Activated CD8-positive, alpha-beta memory T cell treated with anti-CD3 and anti-CD28 coated beads, Interleukin-2, amount 10 ng/mL, durations not matched to agents 7 days and 5 days (primary cell): ENCODE measurements at regions of chr6 and their contacts with region 1.

Region 1: DNA sequence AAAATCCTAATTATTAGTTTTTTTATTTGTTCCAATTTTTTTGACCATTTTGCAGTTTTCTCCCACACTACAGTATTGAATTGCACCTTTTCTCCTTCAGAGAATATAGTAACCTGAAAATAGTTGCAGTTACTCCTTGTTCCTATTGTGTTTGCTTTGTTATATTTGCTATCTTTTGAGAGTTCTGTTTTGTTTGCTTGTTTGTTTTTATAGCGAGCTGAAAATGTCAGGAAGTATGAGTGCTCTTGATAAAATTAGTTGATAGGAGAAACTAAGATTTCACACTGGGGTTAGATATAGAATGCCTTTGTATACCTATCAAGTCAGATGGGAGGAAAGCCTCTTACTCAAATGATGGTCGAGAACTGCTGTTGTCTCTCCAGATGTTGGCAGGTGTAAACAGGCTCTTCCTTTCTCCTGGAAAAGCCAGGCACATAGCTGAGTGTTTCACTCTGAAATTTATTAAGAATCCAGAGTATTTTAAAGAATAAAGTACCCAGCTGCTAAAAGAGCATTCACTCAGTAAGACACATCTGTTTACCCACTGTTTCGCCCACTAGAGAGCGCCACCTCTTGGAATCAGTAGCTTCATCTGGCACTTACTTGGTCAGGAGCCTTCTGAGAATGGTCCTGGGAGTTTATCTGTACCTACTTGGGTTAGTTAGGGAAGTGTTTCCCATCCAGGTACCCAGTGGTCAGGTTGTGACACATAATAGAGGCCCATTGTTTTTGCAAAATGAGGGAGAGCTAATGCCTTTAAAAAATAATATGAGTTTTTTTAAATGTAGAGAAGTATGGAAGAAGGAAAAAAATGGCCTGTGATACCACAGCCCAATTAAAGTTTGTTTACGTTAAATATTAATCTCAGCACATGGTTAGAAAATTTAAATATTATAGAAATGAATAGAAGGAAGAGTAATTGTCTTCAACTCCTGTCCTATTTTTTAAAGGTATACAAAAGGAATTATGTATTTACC is 11.2 kb downstream of the NT5DC1 start:
- DNase-seq: peak; percentile 62
- ATAC-seq: peak; percentile 64
- H3K4me3 Mint-ChIP-seq: no peak overlapping the region
- H3K27ac Mint-ChIP-seq: no peak overlapping the region
- H3K4me1 Mint-ChIP-seq: no peaks in the 10 kb centered on the region
- H3K27me3 Mint-ChIP-seq: no peaks in the 10 kb centered on the region

Region 2: GRCh38 chr6:115740907-115741306 is 370.9 kb before region 1 on chr6:
- CTCF ChIA-PET with region 1: no interaction called
- DNase-seq: no peak
- ATAC-seq: no peak
- H3K4me3 Mint-ChIP-seq: no peak overlapping the region
- H3K27ac Mint-ChIP-seq: no peak overlapping the region
- H3K4me1 Mint-ChIP-seq: no peaks in the 10 kb centered on the region
- H3K27me3 Mint-ChIP-seq: no peaks in the 10 kb centered on the region

Region 3: DNA sequence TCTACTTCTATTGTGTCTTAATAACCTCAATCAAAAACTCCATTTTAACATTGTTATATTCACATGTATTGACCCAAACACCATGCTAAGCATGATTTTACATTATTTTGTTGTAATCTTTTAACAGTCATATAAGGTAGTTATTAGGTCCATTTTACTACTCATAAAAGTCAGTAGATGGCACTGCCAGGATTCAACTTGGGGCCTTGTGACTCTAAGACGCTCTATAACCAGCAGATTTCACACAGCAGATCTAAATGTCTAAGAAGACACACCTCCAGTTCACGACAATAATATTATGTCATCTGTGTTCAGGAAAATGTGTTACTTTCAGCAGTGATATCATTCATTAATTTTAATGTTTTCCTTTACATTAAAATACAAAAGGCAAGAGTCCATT is 139.2 kb before region 1 on chr6:
- CTCF ChIA-PET with region 1: no interaction called
- DNase-seq: no peak
- ATAC-seq: no peak
- H3K4me3 Mint-ChIP-seq: no peak overlapping the region
- H3K27ac Mint-ChIP-seq: no peak overlapping the region
- H3K4me1 Mint-ChIP-seq: no peaks in the 10 kb centered on the region
- H3K27me3 Mint-ChIP-seq: peaks cover 2% of the 10 kb centered on the region

Region 4: DNA sequence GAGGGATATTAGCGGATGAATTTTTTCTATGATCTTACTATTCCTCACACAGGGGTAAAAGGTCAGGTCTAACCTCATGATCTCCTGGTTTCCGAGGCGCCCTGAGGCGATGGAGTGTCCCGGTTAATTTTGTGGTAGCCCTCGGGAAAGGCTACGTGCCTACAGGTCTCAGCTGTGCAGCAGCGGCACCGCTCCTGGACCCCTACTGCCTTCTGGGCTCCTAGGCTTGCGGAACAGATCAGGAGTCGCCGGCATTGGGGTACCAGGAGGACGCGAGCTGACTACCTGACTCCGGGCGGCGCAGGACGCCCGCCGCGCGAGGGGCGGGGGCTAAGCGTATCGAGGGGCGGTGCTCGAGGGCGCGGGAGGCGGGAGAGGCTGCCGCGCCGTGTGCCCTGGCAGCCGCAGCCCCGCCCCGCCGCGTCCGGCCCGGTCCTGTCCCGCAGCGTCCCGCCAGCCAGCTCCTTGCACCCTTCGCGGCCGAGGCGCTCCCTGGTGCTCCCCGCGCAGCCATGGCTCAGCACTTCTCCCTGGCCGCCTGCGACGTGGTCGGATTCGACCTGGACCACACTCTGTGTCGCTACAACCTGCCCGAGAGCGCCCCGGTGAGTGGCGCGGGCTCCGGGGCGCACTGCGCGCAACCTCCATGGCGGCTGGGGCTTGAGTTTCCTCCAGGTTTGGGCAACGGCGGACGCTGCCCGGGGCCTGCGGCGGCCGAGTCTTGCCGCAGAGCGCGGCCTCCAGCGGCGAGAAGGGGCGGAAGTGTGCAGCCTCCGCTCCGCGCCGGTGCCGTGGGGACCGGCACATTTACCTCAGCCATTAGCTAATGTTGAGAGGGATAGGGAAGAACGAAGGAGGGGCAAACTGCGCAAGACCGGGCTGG is 11.2 kb before region 1 on chr6 and contains the start of gene NT5DC1:
- CTCF ChIA-PET with region 1: interaction called, 33 read pairs
- DNase-seq: peak; percentile 90
- ATAC-seq: peak; percentile 94
- H3K4me3 Mint-ChIP-seq: peak within 1 kb of the TSS; percentile 85
- H3K27ac Mint-ChIP-seq: peak within 1 kb of the TSS; percentile 89
- H3K4me1 Mint-ChIP-seq: peaks cover 47% of the 10 kb centered on the region
- H3K27me3 Mint-ChIP-seq: no peaks in the 10 kb centered on the region
- total RNA-seq, gene NT5DC1: 26.4 to 43.7 TPM

Region 5: DNA sequence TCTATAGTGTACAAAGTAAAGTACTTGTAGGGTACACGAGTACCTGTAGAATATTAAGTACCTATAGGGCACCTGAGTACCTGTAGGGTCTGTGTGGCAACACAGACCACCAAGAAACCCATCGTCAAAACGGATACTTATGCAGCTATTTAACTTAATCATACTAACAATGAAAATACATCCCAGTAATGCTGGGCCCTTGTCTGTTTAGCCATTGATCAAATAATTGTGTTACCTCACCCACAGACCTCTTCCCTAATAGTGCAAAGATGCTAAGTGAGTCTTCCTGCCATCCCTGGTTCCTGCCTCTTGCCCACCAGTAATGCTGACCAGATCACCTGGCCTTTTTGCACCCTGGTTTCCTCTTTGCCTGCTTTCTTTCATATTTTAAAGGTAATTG is 21.6 kb after region 1 on chr6:
- CTCF ChIA-PET with region 1: interaction called, 10 read pairs
- DNase-seq: no peak
- ATAC-seq: no peak
- H3K4me3 Mint-ChIP-seq: no peak overlapping the region
- H3K27ac Mint-ChIP-seq: no peak overlapping the region
- H3K4me1 Mint-ChIP-seq: peaks cover 16% of the 10 kb centered on the region
- H3K27me3 Mint-ChIP-seq: no peaks in the 10 kb centered on the region